PC-3 (cell line): ENCODE measurements at regions of chr10 and their contacts with region 1.

Region 1: DNA sequence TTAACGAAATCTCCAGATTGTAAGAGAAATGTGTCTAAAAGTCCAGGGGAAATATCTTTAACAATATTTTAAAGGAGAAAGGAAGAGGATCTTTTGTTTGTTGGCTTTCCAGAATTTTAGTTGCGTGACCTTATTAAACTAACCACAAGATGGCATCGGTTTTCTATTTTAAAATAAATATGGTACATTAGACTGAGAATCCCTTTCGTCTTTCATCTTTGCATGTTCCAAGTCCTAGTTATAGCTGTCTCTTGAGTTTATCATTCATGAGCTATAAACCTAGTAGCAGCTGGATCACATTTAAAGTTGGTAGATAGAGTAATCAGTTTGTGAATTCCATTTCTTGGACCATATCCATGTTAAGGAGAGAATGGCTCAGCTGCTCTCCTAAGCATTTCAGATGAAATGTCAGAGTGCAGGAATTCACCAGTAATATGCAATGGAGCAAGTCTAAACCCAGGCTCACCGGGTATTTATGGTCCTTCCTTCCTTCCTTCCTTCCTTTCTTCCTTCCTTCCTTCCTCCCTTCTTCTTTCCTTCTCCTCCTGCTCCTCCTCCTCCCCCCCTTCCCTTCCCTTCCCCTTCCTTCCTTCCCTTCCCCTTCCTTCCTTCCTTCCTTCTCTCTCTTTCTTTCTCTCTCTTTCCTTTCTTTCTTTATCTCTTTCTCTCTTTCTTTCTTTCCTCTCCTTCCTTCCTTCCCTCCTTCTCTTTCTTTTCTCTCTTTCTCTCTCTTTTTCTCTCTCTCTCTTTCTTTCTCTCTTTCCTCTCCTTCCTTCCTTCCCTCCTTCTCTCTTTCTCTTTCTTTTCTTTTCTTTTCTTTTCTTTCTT is 57.8 kb upstream of the RAB18 start:
- DNase-seq: peak; percentile 51
- ATAC-seq: peak; percentile 56
- H3K4me3 ChIP-seq: no peak overlapping the region; the same call in 1 of the 2 replicates
- H3K27ac ChIP-seq: no peak overlapping the region
- H3K4me1 ChIP-seq: 0 out of 2 replicates have a peak, but pooled peaks cover 3% of the 10 kb centered on the region
- H3K27me3 ChIP-seq: no peaks in the 10 kb centered on the region
- CTCF ChIP-seq: peak; percentile 53

Region 2: GRCh38 chr10:27369880-27370279 is 76.4 kb before region 1 on chr10:
- CTCF ChIA-PET with region 1: no interaction called
- POLR2A ChIA-PET with region 1: no interaction called
- intact Hi-C with region 1: loop called (anchors 5 kb)
- DNase-seq: peak; percentile 41
- ATAC-seq: peak; percentile 20; the same call in 1 of the 2 replicates
- H3K4me3 ChIP-seq: no peak overlapping the region
- H3K27ac ChIP-seq: no peak overlapping the region
- H3K4me1 ChIP-seq: peaks cover 10% of the 10 kb centered on the region
- H3K27me3 ChIP-seq: no peaks in the 10 kb centered on the region
- CTCF ChIP-seq: peak; percentile 56; the same call in 1 of the 2 replicates

Region 3: DNA sequence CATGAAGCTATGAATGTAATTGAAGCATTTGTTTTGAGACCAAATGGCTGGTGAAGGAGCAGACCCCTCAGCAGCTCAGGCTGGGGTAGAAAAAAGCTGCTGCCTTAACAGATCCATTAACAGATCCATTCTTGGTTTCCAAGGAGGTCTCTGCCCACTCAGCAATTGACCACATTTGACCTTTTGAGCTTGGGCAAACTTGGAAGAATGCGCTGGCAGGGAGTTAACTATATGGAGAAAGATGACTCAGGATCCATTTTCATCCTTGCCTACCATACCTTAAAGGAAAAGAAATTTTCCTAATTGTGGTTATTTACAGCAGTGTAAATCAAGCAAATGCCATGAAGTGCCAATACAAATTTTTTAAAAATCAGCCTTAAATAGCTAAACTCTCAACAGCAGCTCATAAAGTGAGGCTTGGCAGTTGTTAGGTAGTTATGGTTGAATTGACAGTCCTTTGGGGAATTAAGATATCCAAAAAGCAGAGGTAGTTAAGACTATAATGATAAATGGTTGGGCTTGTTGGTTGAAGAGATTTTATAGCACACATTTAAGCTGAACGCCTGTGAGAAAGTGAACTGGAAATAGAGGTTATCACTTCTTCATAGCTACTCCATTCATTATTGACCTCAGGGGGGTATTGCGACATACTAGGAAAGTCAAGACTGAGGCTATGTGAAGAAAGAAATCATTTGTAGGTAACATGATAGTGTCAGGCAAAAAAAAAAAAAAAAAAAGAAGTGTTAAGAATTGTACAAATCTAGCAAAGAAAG is 215.4 kb after region 1 on chr10:
- CTCF ChIA-PET with region 1: no interaction called
- POLR2A ChIA-PET with region 1: no interaction called
- intact Hi-C with region 1: loop called (anchors 5 kb)
- DNase-seq: peak; percentile 60
- ATAC-seq: no peak
- H3K4me3 ChIP-seq: no peak overlapping the region
- H3K27ac ChIP-seq: 0 out of 2 replicates have a peak overlapping the region, but pooled peaks have one; percentile 14
- H3K4me1 ChIP-seq: peaks cover 11% of the 10 kb centered on the region
- H3K27me3 ChIP-seq: no peaks in the 10 kb centered on the region
- CTCF ChIP-seq: no peak